Posterior vena cava (tissue), 2 donors: ENCODE measurements at regions of chr5 and their contacts with region 1.

Region 1: GRCh38 chr5:120644516-120644915 is 180.4 kb downstream of the PRR16 start:
- DNase-seq: no peak

Region 2: DNA sequence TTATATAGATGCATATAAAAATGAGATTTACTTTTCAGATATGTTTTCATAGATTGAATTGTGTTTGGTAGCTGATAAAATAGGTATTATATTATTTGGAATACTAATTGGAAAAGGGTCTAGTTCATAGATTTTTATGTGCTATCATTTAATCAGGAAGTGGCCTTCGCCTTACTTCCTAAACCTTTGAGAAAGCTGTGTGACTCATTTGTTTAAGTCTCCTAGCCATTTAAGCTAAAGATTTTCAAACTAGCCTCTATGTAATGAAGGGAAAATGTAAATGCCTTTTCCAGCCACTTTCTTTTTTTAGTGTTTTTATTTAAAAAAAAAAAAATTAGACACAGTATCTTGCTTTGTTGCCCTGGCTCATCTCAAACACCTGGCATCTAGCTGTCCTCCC is 1476.1 kb before region 1 on chr5:
- intact Hi-C with region 1: no loop called
- DNase-seq: no peak

Region 3: GRCh38 chr5:121384359-121384758 is 739.8 kb after region 1 on chr5:
- intact Hi-C with region 1: loop called in 1 of 2 experiments (anchors 10 kb)
- DNase-seq: no peak

Region 4: DNA sequence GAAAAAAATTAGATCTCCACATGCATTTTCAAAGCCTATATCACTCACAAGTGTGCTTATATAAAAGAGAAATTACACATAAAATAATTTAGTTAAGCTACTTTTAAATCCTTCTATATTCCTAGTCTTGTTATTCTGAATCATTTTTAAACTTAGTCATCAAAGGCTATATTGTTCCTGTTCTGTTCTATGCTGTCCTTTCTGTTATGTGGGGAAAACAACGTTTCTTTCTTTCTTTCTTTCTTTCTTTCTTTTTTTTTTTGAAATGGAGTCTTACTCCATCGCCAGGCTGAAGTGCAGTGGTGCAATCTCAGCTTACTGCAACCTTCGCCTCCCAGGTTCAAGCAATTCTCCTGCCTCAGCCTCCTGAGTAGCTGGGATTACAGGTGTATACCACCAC is 817.9 kb after region 1 on chr5:
- intact Hi-C with region 1: no loop called
- DNase-seq: no peak